ENCODE measurements at regions of chr1 and their contacts with region 1.

Region 1: DNA sequence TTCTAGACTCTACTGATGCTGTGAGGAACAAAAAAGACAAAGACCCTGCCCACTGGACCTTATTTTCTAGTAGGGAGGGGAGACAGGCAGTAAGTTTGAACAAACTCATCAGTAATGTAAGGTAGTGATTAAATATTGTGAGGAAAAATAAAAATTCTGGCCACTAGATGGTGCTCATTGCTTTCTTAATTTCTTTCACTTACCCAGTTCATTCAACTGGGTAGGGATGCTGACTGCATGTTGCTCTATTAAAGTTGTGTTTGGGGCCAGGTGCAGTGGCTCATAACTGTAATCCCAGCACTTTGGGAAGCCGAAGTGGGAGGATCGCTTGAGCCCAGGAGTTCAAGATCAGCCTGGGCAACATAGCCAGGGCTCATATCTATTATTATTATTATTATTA is 6.3 kb upstream of the KYAT3 start:
- DNase-seq: no peak
- ATAC-seq: peak; percentile 98
- H3K4me3 ChIP-seq: no peak overlapping the region
- H3K27ac ChIP-seq: no peak overlapping the region
- H3K4me1 ChIP-seq: peaks cover under 1% of the 10 kb centered on the region
- H3K27me3 ChIP-seq: no peaks in the 10 kb centered on the region
- CTCF ChIP-seq: peak; percentile 24 to 64 (median 28); a peak in 4 of 6 replicates
- EP300 ChIP-seq: no peak
- POLR2A ChIP-seq: no peak
- RAD21 ChIP-seq: peak; percentile 76

Region 2: DNA sequence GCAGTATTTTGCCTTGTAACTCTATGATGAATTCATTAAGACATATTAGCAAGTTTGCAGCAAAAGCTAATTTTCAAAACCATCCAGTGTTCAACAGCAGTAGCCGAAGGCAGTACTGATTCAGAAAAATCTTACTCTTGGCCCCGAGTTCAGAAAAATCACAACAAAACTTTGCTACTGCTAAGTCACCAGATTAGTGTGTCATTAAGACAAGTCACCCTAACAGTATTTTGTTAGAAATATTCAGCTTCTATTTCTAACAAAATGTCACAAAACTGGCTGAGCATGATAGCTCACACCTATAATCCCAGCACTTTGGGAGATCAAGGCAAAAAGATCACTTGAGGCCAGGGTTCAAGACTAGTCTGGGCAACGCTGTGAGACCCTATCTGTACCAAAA is 115.6 kb before region 1 on chr1:
- CTCF ChIA-PET with region 1: no interaction called
- POLR2A ChIA-PET with region 1: no interaction called
- RAD21 ChIA-PET with region 1: no interaction called
- SMC1A ChIA-PET with region 1: no interaction called
- in situ Hi-C with region 1: no loop called
- intact Hi-C with region 1: no loop called
- DNase-seq: no peak
- ATAC-seq: no peak
- H3K4me3 ChIP-seq: no peak overlapping the region
- H3K27ac ChIP-seq: no peak overlapping the region
- H3K4me1 ChIP-seq: no peaks in the 10 kb centered on the region
- H3K27me3 ChIP-seq: no peaks in the 10 kb centered on the region
- CTCF ChIP-seq: no peak
- EP300 ChIP-seq: no peak
- POLR2A ChIP-seq: no peak
- RAD21 ChIP-seq: no peak

Region 3: GRCh38 chr1:88973520-88974137 is 25.1 kb before region 1 on chr1:
- CTCF ChIA-PET with region 1: interaction called, 17 read pairs
- POLR2A ChIA-PET with region 1: no interaction called
- RAD21 ChIA-PET with region 1: interaction called, 7 read pairs
- SMC1A ChIA-PET with region 1: interaction called, 5 read pairs
- in situ Hi-C with region 1: no loop called
- intact Hi-C with region 1: no loop called
- DNase-seq: no peak
- ATAC-seq: peak; percentile 74
- H3K4me3 ChIP-seq: no peak overlapping the region
- H3K27ac ChIP-seq: no peak overlapping the region
- H3K4me1 ChIP-seq: peaks cover 4% of the 10 kb centered on the region
- H3K27me3 ChIP-seq: no peaks in the 10 kb centered on the region
- CTCF ChIP-seq: peak; percentile 39 to 63 (median 52); a peak in 5 of 6 replicates
- EP300 ChIP-seq: no peak
- POLR2A ChIP-seq: no peak
- RAD21 ChIP-seq: peak; percentile 62

Region 4: GRCh38 chr1:89022167-89022959 is 23.6 kb after region 1 on chr1 and contains the start of gene GBP3:
- CTCF ChIA-PET with region 1: interaction called, 8 read pairs
- POLR2A ChIA-PET with region 1: no interaction called
- RAD21 ChIA-PET with region 1: interaction called, 3 read pairs
- SMC1A ChIA-PET with region 1: interaction called, 18 read pairs
- in situ Hi-C with region 1: no loop called
- intact Hi-C with region 1: no loop called
- DNase-seq: peak; percentile 33
- ATAC-seq: peak; percentile 88
- H3K4me3 ChIP-seq: peak within 1 kb of the TSS; percentile 65
- H3K27ac ChIP-seq: peak within 1 kb of the TSS; percentile 52
- H3K4me1 ChIP-seq: peaks cover 3% of the 10 kb centered on the region; the same call in 1 of the 2 replicates
- H3K27me3 ChIP-seq: no peaks in the 10 kb centered on the region
- CTCF ChIP-seq: no peak
- EP300 ChIP-seq: no peak
- POLR2A ChIP-seq: no peak
- RAD21 ChIP-seq: no peak
- polyA plus RNA-seq, gene GBP3: 0.32 to 1.2 TPM

Region 5: GRCh38 chr1:89198491-89199072 is 199.9 kb after region 1 on chr1 and contains the start of gene GBP4:
- CTCF ChIA-PET with region 1: no interaction called
- POLR2A ChIA-PET with region 1: no interaction called
- RAD21 ChIA-PET with region 1: interaction called, 10 read pairs
- SMC1A ChIA-PET with region 1: interaction called, 5 read pairs
- in situ Hi-C with region 1: no loop called
- intact Hi-C with region 1: loop called (anchors 2 kb)
- DNase-seq: peak; percentile 69
- ATAC-seq: peak; percentile 59
- H3K4me3 ChIP-seq: peak within 1 kb of the TSS; percentile 66
- H3K27ac ChIP-seq: peak within 1 kb of the TSS; percentile 73
- H3K4me1 ChIP-seq: peaks cover 13% of the 10 kb centered on the region
- H3K27me3 ChIP-seq: no peaks in the 10 kb centered on the region
- CTCF ChIP-seq: 0 out of 6 replicates have a peak, but pooled peaks of 1 of the 3 experiments have one; percentile 8
- EP300 ChIP-seq: peak; percentile 57 to 61; a peak in 2 of 4 replicates
- POLR2A ChIP-seq: no peak
- RAD21 ChIP-seq: no peak
- polyA plus RNA-seq, gene GBP4: 2.4 to 2.5 TPM

Region 6: GRCh38 chr1:89454845-89455521 is 456.3 kb after region 1 on chr1:
- CTCF ChIA-PET with region 1: interaction called, 21 read pairs
- POLR2A ChIA-PET with region 1: no interaction called
- RAD21 ChIA-PET with region 1: interaction called, 12 read pairs
- SMC1A ChIA-PET with region 1: interaction called, 7 read pairs
- in situ Hi-C with region 1: loop called (anchors 5 kb)
- intact Hi-C with region 1: loop called (anchors 1 kb)
- DNase-seq: no peak
- ATAC-seq: peak; percentile 86
- H3K4me3 ChIP-seq: no peak overlapping the region
- H3K27ac ChIP-seq: no peak overlapping the region
- H3K4me1 ChIP-seq: peaks cover 7% of the 10 kb centered on the region; the same call in 1 of the 2 replicates
- H3K27me3 ChIP-seq: no peaks in the 10 kb centered on the region
- CTCF ChIP-seq: peak; percentile 53 to 75 (median 55); a peak in 5 of 6 replicates
- EP300 ChIP-seq: no peak
- POLR2A ChIP-seq: no peak
- RAD21 ChIP-seq: peak; percentile 93

Measured in GM12878 (cell line).